ENCODE measurements at regions of chr10 and their contacts with region 1.

Region 1: GRCh38 chr10:22997102-22997501 is 69.2 kb downstream of the ARMC3 start:
- DNase-seq: no peak
- H3K4me3 ChIP-seq: no peak overlapping the region
- CTCF ChIP-seq: no peak
- POLR2A ChIP-seq: no peak

Region 2: DNA sequence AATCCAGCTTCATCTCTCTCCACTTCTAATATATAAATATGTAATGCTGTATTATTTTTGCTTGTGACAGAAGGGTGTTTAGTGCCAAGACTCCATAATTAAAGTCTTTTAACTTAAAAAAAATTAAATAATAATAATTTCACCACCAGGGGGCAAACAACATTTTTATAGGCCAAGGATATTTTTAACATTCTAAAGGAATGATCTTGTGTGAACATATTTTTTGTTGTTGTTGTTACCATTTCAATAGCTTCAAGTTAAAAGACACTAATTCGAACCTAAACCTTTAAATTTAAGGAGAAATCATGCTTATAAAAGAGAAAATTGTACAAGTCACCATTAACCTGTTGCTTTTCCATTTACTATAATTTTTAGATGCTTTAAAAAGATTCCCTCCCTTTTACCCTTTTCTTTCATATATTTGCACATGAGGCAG is 986.1 kb before region 1 on chr10:
- intact Hi-C with region 1: loop called (anchors 10 kb)
- DNase-seq: no peak
- H3K4me3 ChIP-seq: no peak overlapping the region
- CTCF ChIP-seq: no peak
- POLR2A ChIP-seq: no peak

Region 3: GRCh38 chr10:22911889-22912762 is 85.0 kb before region 1 on chr10:
- intact Hi-C with region 1: no loop called
- DNase-seq: no peak
- H3K4me3 ChIP-seq: no peak overlapping the region
- CTCF ChIP-seq: no peak
- POLR2A ChIP-seq: no peak

Measured in lower leg skin (tissue), 4 donors.